ENCODE measurements at regions of chr10 and their contacts with region 1.

Region 1: GRCh38 chr10:104308439-104308903 is 29.8 kb downstream of the ITPRIP start:
- DNase-seq: peak; percentile 86
- H3K4me3 Mint-ChIP-seq: peak overlapping the region; percentile 78
- H3K27ac Mint-ChIP-seq: peak overlapping the region; percentile 71
- H3K4me1 Mint-ChIP-seq: peaks cover 64% of the 10 kb centered on the region
- H3K27me3 Mint-ChIP-seq: no peaks in the 10 kb centered on the region

Region 2: GRCh38 chr10:104268716-104269645 is 39.5 kb before region 1 on chr10 and contains the start of gene GSTO2:
- intact Hi-C with region 1: no loop called
- DNase-seq: peak; percentile 99
- H3K4me3 Mint-ChIP-seq: peak within 1 kb of the TSS; percentile 87
- H3K27ac Mint-ChIP-seq: peak within 1 kb of the TSS; percentile 90
- H3K4me1 Mint-ChIP-seq: peaks cover 29% of the 10 kb centered on the region
- H3K27me3 Mint-ChIP-seq: peaks cover 2% of the 10 kb centered on the region
- total RNA-seq, gene GSTO2: 0.77 and 1.3 TPM in 2 replicates

Region 3: DNA sequence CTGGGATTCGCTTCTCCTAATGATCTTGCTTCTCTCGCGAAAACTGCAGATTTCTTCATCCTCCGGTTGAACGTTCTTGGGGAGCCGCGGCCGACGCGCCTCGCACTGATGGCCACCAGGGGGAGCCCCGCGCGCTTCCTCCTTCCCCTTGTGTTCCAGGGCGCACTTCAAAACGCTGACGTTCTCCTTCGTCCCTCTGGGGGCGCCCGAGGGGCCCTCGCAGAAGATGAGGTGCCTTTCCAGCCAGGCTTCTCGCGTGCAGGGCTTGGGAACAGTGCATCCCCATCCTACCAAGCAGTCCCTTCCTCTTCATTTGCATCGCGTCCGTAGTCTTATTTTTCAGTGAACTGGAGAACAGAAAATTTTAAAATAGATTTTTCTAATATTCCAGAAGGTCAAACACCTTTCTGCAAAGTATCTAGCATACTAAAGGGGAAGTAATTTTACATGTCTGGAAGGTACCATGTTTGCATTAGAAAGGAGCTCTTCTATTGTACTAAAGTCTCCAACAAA is 17.0 kb before region 1 on chr10:
- intact Hi-C with region 1: loop called (anchors 2 kb)
- DNase-seq: peak; percentile 96
- H3K4me3 Mint-ChIP-seq: no peak overlapping the region
- H3K27ac Mint-ChIP-seq: no peak overlapping the region
- H3K4me1 Mint-ChIP-seq: peaks cover 13% of the 10 kb centered on the region
- H3K27me3 Mint-ChIP-seq: peaks cover 32% of the 10 kb centered on the region

Region 4: DNA sequence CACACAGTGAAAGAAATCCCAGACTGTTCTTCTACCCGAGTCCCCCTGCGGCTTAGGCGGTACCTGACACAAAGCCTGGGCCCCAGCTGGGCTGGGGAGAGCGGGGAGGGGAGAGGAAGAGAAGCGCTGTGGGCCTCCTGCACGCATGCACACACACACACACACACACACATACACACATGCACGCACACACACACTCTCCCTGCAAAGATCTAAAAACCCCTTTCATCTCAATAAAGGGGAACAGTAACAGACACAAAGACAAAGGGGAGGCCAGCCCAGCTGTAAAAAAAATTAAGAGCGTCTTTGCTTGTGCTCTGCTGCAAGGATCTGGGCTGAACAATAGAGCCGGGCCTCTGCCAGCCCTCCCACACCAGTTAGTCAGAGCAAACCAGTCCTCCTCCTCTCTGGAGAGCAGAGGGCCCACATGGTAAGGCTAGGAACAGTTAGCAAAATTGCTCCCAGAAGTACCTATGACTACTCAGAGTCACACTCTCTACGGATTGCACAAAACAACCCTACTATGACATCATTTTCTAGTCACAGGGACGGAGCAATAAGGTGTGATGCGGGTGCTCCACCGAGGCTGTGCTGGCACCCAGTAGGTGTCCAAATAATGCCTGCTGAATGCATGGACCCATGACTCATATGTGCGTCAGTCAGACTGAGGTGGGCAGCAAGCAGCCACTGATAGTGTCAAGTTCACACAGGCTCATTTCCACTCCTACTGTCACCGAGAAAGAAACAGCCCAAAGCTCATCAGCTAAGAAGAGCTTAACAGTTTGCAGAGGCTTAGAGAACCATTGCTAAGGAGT is 20.6 kb after region 1 on chr10:
- intact Hi-C with region 1: loop called (anchors 1 kb)
- DNase-seq: peak; percentile 88
- H3K4me3 Mint-ChIP-seq: peak overlapping the region; percentile 86
- H3K27ac Mint-ChIP-seq: peak overlapping the region; percentile 91
- H3K4me1 Mint-ChIP-seq: peaks cover 89% of the 10 kb centered on the region
- H3K27me3 Mint-ChIP-seq: no peaks in the 10 kb centered on the region

Measured in activated CD4-positive, alpha-beta T cell treated with anti-CD3 and anti-CD28 coated beads, Interleukin-2, amount 10 ng/mL, durations not matched to agents 24 days and 14 days (primary cell).